Naive thymus-derived CD4-positive, alpha-beta T cell (primary cell): ENCODE measurements at regions of chr18 and their contacts with region 1.

Region 1: DNA sequence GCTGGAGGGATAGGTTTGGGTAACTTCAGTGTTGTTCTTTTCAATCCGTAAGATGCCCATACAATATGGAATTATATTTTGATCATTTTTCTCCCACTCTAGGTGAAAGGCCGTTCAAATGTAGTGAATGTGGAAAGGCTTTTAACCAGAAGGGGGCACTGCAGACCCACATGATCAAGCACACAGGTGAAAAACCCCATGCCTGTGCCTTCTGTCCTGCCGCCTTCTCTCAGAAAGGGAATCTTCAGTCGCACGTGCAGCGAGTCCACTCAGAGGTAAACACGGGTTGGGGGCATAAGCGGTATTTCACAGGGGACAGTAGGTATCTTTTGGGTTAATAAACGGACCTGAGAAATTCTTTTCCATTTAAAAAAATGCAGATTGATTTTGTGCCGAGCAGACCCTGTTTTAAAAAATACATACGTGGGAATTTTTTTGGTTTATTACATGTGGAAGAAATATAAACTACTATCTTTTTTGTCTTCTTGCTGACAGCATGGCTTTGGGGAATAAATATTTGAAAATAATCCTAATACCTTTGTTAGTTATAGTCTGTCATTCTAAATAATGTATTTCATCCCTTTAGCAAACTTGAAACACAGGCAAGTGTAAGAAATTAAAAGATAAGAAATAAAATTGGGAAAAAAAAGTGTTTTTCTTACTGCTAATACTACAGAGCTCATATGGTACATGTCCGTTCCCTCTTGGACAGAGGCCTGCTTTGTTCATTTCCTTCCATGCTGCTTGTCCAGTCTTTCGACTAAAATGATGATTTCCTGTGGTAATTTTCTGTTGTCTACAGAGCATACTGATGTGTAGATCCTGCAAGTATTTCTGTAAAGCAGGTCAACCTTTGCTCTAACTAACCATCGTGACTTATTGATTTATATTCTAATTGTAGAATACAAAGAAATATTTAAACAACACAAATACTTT is 53.3 kb downstream of the ZNF236 start:
- DNase-seq: peak in 5 of 9 donors; percentile 20 to 35 (median 28)
- ATAC-seq: peak; percentile 65
- H3K4me3 ChIP-seq: no peak overlapping the region
- H3K4me3 Mint-ChIP-seq: no peak overlapping the region
- H3K27ac ChIP-seq: no peak overlapping the region
- H3K27ac Mint-ChIP-seq: peak overlapping the region in 1 of 9 donors; percentile 5
- H3K4me1 ChIP-seq: no peaks in the 10 kb centered on the region
- H3K4me1 Mint-ChIP-seq: peaks cover 0 to 14% (median 5%) of the 10 kb centered on the region in 7 donors
- H3K27me3 ChIP-seq: no peaks in the 10 kb centered on the region
- H3K27me3 Mint-ChIP-seq: no peaks in the 10 kb centered on the region

Region 2: GRCh38 chr18:76398896-76399612 is 476.6 kb before region 1 on chr18:
- CTCF ChIA-PET with region 1: no interaction called
- POLR2A ChIA-PET with region 1: no interaction called
- intact Hi-C with region 1: no loop called
- DNase-seq: peak; percentile 47 to 78 (median 71)
- ATAC-seq: peak; percentile 93
- H3K4me3 ChIP-seq: no peak overlapping the region
- H3K4me3 Mint-ChIP-seq: peak overlapping the region in 1 of 10 donors; percentile 12
- H3K27ac ChIP-seq: no peak overlapping the region
- H3K27ac Mint-ChIP-seq: peak overlapping the region in 2 of 9 donors; percentile 41 to 73
- H3K4me1 ChIP-seq: no peaks in the 10 kb centered on the region
- H3K4me1 Mint-ChIP-seq: peaks cover 5 to 38% (median 27%) of the 10 kb centered on the region in 7 donors
- H3K27me3 ChIP-seq: no peaks in the 10 kb centered on the region
- H3K27me3 Mint-ChIP-seq: peaks cover 0 to 17% (median 0%) of the 10 kb centered on the region in 5 donors

Region 3: DNA sequence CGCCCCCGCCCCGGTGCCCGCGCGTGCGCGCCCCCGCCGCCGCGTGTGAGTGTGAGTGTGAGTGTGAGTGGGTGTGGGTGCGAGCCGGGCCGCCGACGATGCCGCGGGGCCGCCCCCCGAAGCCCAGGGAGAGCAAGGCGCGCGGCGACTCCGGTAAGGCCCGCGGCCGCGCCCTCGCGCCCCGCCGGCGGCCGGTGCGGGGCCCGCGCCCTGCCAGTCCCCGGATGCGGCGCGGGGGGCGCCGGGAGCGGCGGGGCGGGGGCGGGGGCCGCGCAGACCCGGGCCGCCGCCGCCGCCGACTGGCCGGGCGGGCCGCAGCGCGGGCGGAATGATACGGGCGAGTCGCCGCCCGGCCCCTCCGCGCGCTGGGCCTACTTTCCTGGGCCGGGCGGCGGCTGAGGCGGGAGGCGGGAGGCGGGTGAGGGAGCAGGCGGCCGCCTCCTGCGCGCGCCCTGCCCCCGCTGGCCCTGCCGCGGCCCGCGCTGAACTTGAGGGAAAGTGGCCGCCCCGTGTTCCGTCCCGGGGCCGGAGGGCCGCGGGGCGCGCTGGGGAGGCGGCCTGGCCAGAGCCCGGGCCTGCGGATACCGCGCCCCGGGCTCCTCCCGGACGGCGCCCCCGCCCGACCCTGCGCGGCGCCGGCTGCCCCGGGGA is 53.0 kb before region 1 on chr18 and contains the start of gene ZNF236:
- CTCF ChIA-PET with region 1: no interaction called
- POLR2A ChIA-PET with region 1: no interaction called
- intact Hi-C with region 1: loop called in 1 of 2 experiments (anchors 1 kb)
- DNase-seq: peak; percentile 38 to 78 (median 61)
- ATAC-seq: peak; percentile 76
- H3K4me3 ChIP-seq: peak within 1 kb of the TSS; percentile 99
- H3K4me3 Mint-ChIP-seq: peak within 1 kb of the TSS; percentile 88 to 96 (median 93)
- H3K27ac ChIP-seq: peak within 1 kb of the TSS; percentile 84
- H3K27ac Mint-ChIP-seq: peak within 1 kb of the TSS; percentile 89 to 97 (median 96)
- H3K4me1 ChIP-seq: peaks cover 8 to 10% of the 10 kb centered on the region in 2 donors
- H3K4me1 Mint-ChIP-seq: peaks cover 38 to 65% (median 56%) of the 10 kb centered on the region in 7 donors
- H3K27me3 ChIP-seq: no peaks in the 10 kb centered on the region
- H3K27me3 Mint-ChIP-seq: no peaks in the 10 kb centered on the region
- total RNA-seq, gene ZNF236: 25.9 to 34.5 (median 30.6) TPM

Region 4: GRCh38 chr18:77650799-77651385 is 775.2 kb after region 1 on chr18:
- CTCF ChIA-PET with region 1: no interaction called
- POLR2A ChIA-PET with region 1: no interaction called
- intact Hi-C with region 1: loop called in 1 of 2 experiments (anchors 2 kb)
- DNase-seq: peak in 6 of 9 donors; percentile 3 to 79 (median 16)
- ATAC-seq: peak; percentile 67
- H3K4me3 ChIP-seq: no peak overlapping the region
- H3K4me3 Mint-ChIP-seq: no peak overlapping the region
- H3K27ac ChIP-seq: no peak overlapping the region
- H3K27ac Mint-ChIP-seq: no peak overlapping the region
- H3K4me1 ChIP-seq: no peaks in the 10 kb centered on the region
- H3K4me1 Mint-ChIP-seq: peaks cover 0 to 5% (median 0%) of the 10 kb centered on the region in 7 donors
- H3K27me3 ChIP-seq: no peaks in the 10 kb centered on the region
- H3K27me3 Mint-ChIP-seq: peaks cover 2 to 33% (median 21%) of the 10 kb centered on the region in 5 donors

Region 5: GRCh38 chr18:77702686-77703085 is 827.0 kb after region 1 on chr18:
- CTCF ChIA-PET with region 1: no interaction called
- POLR2A ChIA-PET with region 1: no interaction called
- intact Hi-C with region 1: loop called in 1 of 2 experiments (anchors 5 kb)
- DNase-seq: peak in 4 of 9 donors; percentile 0 to 16 (median 6)
- ATAC-seq: no peak
- H3K4me3 ChIP-seq: no peak overlapping the region
- H3K4me3 Mint-ChIP-seq: no peak overlapping the region
- H3K27ac ChIP-seq: no peak overlapping the region
- H3K27ac Mint-ChIP-seq: no peak overlapping the region
- H3K4me1 ChIP-seq: no peaks in the 10 kb centered on the region
- H3K4me1 Mint-ChIP-seq: no peaks in the 10 kb centered on the region
- H3K27me3 ChIP-seq: no peaks in the 10 kb centered on the region
- H3K27me3 Mint-ChIP-seq: peaks cover 5 to 49% (median 37%) of the 10 kb centered on the region in 5 donors